Activated B cell treated with CpG ODN at 0.5 μM for 24 hours (primary cell): ENCODE measurements at regions of chr6 and their contacts with region 1.

Region 1: GRCh38 chr6:132161283-132161682 is 210.1 kb upstream of the CCN2 start:
- DNase-seq: no peak
- ATAC-seq: no peak
- H3K4me3 Mint-ChIP-seq: no peak overlapping the region
- H3K27ac Mint-ChIP-seq: no peak overlapping the region
- H3K4me1 Mint-ChIP-seq: peaks cover 26% of the 10 kb centered on the region
- H3K27me3 Mint-ChIP-seq: no peaks in the 10 kb centered on the region
- CTCF ChIP-seq: no peak

Region 2: DNA sequence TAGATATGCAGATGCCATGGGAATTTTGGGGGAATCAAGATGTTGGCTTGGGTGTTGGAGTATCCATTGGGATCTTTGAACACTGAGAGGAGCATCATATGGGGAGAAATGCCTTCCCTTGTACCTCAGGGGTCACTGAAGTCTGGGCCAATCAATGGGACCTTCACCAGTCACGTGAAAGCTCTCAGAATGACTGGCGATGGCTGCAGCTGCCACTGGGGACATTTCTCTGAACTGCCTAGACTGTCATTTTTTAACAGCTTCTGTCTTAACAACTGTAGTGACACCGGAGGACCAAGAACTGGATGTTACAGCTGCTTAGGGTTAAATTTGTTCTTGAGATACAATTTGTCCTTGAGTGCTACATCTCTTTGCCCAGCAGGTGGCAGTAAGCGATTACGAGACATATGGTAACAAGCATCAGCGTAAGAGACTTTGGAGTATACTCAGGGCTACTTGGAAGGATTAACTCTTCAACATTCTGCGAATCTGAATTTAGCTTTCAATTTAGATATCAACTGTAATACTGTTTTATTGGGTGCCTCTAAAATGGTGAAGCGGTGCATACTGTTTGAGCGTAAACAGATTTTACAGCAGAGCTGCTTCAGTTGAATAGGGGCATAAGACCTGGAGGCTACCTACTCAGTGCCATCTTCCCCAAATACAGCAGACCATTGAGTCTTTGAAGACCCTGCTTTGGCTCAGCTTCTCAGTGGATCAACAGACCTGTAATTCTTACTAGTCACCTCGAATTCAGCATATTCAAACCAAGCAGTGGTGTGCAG is 246.1 kb before region 1 on chr6:
- CTCF ChIA-PET with region 1: interaction called, 4 read pairs
- POLR2A ChIA-PET with region 1: no interaction called
- intact Hi-C with region 1: loop called (anchors 1 kb)
- DNase-seq: no peak
- ATAC-seq: peak; percentile 75
- H3K4me3 Mint-ChIP-seq: no peak overlapping the region
- H3K27ac Mint-ChIP-seq: no peak overlapping the region
- H3K4me1 Mint-ChIP-seq: peaks cover 26% of the 10 kb centered on the region
- H3K27me3 Mint-ChIP-seq: peaks cover 30% of the 10 kb centered on the region
- CTCF ChIP-seq: peak; percentile 29

Region 3: DNA sequence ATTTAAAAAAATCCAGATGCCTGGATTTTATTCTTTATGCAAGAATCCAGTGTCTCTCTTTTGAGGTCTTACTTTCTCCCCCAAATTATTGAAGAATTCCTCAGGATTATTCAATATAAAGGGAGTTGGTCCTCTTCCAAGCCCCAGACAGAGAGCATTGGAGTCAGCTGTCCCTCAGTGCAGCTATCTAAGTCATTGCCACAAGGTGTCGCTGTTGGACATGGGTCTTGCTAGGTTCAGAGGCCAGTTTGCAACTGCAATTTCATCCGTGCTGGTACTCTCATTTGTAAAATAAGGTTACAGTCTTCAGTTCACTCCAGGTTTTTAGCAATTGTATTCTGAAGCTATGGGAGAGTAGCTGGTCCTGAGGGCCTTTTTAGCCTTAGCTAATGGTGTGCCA is 237.9 kb before region 1 on chr6:
- CTCF ChIA-PET with region 1: interaction called, 6 read pairs
- POLR2A ChIA-PET with region 1: no interaction called
- intact Hi-C with region 1: loop called (anchors 1 kb)
- DNase-seq: no peak
- ATAC-seq: peak; percentile 50
- H3K4me3 Mint-ChIP-seq: no peak overlapping the region
- H3K27ac Mint-ChIP-seq: no peak overlapping the region
- H3K4me1 Mint-ChIP-seq: no peaks in the 10 kb centered on the region
- H3K27me3 Mint-ChIP-seq: peaks cover 4% of the 10 kb centered on the region
- CTCF ChIP-seq: no peak

Region 4: GRCh38 chr6:131949909-131950766 is 211.1 kb before region 1 on chr6:
- CTCF ChIA-PET with region 1: interaction called, 6 read pairs
- POLR2A ChIA-PET with region 1: no interaction called
- intact Hi-C with region 1: loop called (anchors 1 kb)
- DNase-seq: peak; percentile 21
- ATAC-seq: peak; percentile 72
- H3K4me3 Mint-ChIP-seq: peak overlapping the region; percentile 86
- H3K27ac Mint-ChIP-seq: no peak overlapping the region
- H3K4me1 Mint-ChIP-seq: peaks cover 18% of the 10 kb centered on the region
- H3K27me3 Mint-ChIP-seq: peaks cover 36% of the 10 kb centered on the region
- CTCF ChIP-seq: no peak